Activated CD4-positive, alpha-beta memory T cell treated with anti-CD3 and anti-CD28 coated beads for 36 hours (primary cell): ENCODE measurements at regions of chr11 and their contacts with region 1.

Region 1: GRCh38 chr11:9757809-9758636 is 94.1 kb downstream of the SWAP70 start:
- DNase-seq: peak; percentile 95
- H3K4me3 Mint-ChIP-seq: peak overlapping the region; percentile 75
- H3K27ac Mint-ChIP-seq: peak overlapping the region; percentile 79
- H3K4me1 Mint-ChIP-seq: peaks cover 34% of the 10 kb centered on the region
- H3K27me3 Mint-ChIP-seq: no peaks in the 10 kb centered on the region

Region 2: DNA sequence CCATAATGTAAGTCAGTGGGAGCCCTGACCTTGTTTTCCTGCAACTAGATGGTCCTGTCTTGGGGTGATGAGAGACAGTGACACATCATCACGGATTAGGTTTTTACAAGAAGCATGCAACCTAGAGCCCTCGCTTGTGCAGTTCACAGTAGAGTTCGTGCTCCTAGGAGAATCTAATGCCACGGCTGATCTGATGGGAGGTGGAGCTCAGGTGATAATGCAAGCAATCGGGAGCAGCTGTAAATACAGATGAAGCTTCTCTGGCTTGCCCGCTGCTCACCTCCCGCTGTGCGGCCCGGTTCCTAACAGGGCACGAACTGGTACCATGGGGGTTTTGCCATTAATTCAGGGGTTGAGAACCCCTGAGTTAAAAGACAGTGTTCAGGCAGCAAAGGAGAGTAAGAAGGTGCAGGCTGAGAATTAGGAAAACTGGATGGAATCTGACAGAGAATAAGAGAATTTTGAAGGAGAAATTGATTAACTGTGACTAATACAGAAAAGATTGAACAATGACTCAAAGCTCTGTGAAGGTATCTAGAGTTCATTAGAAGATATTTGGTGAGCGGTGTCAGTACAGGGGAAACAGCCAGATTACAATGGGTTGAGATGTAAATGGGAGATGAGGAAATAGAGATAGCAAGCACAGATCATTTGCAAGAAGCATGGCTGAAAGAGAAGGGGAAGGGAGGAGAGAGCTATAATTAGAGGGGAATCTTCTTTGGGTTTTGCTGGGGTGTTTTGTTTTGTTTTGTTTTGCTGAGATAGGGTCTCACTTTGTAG is 163.6 kb before region 1 on chr11:
- CTCF ChIA-PET with region 1: no interaction called
- POLR2A ChIA-PET with region 1: no interaction called
- intact Hi-C with region 1: no loop called
- DNase-seq: no peak
- H3K4me3 Mint-ChIP-seq: no peak overlapping the region
- H3K27ac Mint-ChIP-seq: no peak overlapping the region
- H3K4me1 Mint-ChIP-seq: no peaks in the 10 kb centered on the region
- H3K27me3 Mint-ChIP-seq: no peaks in the 10 kb centered on the region

Region 3: DNA sequence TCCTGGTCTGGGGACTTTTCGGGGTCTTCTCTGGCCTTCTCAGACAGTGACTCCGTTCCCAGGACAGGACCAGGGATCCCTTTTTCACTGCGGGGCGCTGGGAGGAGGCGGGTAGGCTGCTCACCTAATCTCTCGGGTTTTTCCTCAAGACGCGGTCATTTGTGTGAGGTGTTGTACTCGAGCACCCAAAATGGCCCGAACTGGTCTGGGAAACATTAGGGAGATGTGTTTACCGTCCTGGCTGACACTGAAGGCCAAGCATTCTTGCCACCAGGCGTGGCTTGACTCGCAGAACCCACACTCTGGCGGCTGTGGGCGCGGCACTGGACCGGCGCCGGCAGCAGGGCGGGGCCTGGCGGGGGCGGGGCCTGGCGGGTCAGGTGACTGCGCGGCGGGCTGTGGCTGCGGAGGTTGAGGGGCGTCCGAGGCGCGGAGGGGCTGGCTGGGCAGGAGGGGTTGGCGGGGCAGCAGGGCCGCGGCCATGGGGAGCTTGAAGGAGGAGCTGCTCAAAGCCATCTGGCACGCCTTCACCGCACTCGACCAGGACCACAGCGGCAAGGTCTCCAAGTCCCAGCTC is 94.2 kb before region 1 on chr11 and contains the start of gene SWAP70:
- CTCF ChIA-PET with region 1: interaction called, 3 read pairs
- POLR2A ChIA-PET with region 1: no interaction called
- intact Hi-C with region 1: loop called (anchors 5 kb)
- DNase-seq: peak; percentile 81
- H3K4me3 Mint-ChIP-seq: peak within 1 kb of the TSS; percentile 84
- H3K27ac Mint-ChIP-seq: no peak within 1 kb of the TSS
- H3K4me1 Mint-ChIP-seq: peaks cover 14% of the 10 kb centered on the region
- H3K27me3 Mint-ChIP-seq: peaks cover 26% of the 10 kb centered on the region
- total RNA-seq, gene SWAP70: 7.7 to 8.6 TPM

Region 4: DNA sequence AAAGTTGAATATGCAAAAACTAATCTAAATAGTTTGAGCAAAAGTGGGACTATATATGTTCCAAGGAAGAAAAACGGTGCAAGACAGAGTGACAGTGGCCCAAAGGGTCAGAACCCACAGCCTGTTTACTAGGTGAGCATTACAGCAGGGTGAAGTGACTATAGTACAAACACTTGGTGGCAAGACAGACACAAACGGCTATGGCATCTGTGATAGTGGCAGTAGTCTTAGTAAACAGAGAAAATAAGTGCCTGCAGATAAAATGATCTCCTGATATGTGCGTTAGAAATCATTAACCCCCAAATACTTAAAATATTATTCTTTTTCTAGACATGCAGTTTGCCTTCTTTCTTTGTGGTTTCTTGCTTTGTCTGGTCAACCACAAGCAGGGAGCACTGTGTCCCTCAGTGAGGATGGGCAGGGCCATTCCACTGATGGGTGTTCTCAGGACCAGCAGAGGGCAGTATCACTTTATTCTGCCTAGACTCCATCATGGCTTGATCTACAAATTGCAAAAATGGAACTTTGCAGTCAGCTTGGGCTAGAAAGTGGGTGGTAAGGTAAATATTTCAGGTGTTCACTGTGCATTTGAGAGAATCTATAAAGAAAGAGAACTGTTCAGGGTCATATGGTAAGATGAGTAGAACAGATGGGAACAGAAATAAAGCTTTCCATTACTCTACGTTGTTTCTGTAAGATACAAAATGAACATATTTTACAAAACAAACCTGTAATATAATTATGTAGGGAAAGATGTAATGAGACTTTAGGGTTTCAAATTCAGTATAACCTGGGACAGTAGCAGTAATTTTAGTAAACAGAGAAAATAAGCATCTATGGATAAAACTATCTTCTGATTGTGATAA is 104.1 kb after region 1 on chr11:
- CTCF ChIA-PET with region 1: interaction called, 9 read pairs
- POLR2A ChIA-PET with region 1: interaction called, 3 read pairs
- intact Hi-C with region 1: loop called (anchors 1 kb)
- DNase-seq: peak; percentile 65
- H3K4me3 Mint-ChIP-seq: no peak overlapping the region
- H3K27ac Mint-ChIP-seq: no peak overlapping the region
- H3K4me1 Mint-ChIP-seq: peaks cover 27% of the 10 kb centered on the region
- H3K27me3 Mint-ChIP-seq: no peaks in the 10 kb centered on the region

Region 5: GRCh38 chr11:10076458-10077141 is 318.6 kb after region 1 on chr11:
- CTCF ChIA-PET with region 1: interaction called, 7 read pairs
- POLR2A ChIA-PET with region 1: no interaction called
- intact Hi-C with region 1: loop called (anchors 2 kb)
- DNase-seq: peak; percentile 44
- H3K4me3 Mint-ChIP-seq: no peak overlapping the region
- H3K27ac Mint-ChIP-seq: no peak overlapping the region
- H3K4me1 Mint-ChIP-seq: no peaks in the 10 kb centered on the region
- H3K27me3 Mint-ChIP-seq: no peaks in the 10 kb centered on the region

Region 6: GRCh38 chr11:10322830-10323792 is 565.1 kb after region 1 on chr11:
- CTCF ChIA-PET with region 1: interaction called, 22 read pairs
- POLR2A ChIA-PET with region 1: no interaction called
- intact Hi-C with region 1: loop called (anchors 1 kb)
- DNase-seq: peak; percentile 67
- H3K4me3 Mint-ChIP-seq: peak overlapping the region; percentile 48
- H3K27ac Mint-ChIP-seq: peak overlapping the region; percentile 77
- H3K4me1 Mint-ChIP-seq: peaks cover 13% of the 10 kb centered on the region
- H3K27me3 Mint-ChIP-seq: peaks cover 7% of the 10 kb centered on the region